Psoas muscle (tissue), 8 donors: ENCODE measurements at regions of chr12 and their contacts with region 1.

Region 1: GRCh38 chr12:57452937-57453509 is 2.1 kb upstream of the INHBE start:
- DNase-seq: peak; percentile 80 to 90
- ATAC-seq: peak; percentile 71 to 87 (median 81)
- H3K4me3 ChIP-seq: peak overlapping the region; percentile 39
- H3K27ac ChIP-seq: peak overlapping the region; percentile 87
- H3K4me1 ChIP-seq: peaks cover 35% of the 10 kb centered on the region
- H3K27me3 ChIP-seq: no peaks in the 10 kb centered on the region
- CTCF ChIP-seq: peak; percentile 90

Region 2: DNA sequence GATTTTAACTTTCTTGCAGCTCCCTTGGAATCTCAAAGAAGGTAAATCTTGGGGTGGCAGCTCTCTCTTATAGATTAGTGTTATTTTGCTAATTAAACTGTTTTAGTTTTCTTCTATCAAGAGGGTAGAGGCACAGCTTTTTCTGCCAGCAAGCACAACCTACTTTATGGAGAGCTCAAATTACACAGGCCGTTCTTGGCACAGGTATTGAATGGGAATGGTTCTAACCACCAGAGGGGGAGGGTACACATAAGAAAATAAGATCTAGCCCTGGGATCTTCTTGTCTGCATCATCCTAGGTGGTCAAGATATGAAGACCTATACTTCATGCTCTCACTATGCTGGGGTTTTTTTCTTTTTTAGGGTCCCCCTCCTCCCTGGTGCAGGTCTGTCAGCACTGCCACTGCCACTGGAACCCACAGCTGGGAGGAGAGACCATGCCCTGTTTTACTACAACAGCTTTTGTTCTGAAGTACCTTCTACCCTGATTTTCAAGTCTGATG is 153.5 kb before region 1 on chr12:
- intact Hi-C with region 1: loop called in 1 of 2 experiments (anchors 5 kb)
- DNase-seq: no peak
- ATAC-seq: peak; percentile 64 to 90 (median 82)
- H3K4me3 ChIP-seq: no peak overlapping the region
- H3K27ac ChIP-seq: no peak overlapping the region
- H3K4me1 ChIP-seq: peaks cover 12% of the 10 kb centered on the region
- H3K27me3 ChIP-seq: no peaks in the 10 kb centered on the region
- CTCF ChIP-seq: no peak

Region 3: GRCh38 chr12:57309420-57309819 is 143.6 kb before region 1 on chr12:
- intact Hi-C with region 1: loop called (anchors 2 to 5 kb)
- DNase-seq: no peak
- ATAC-seq: no peak
- H3K4me3 ChIP-seq: no peak overlapping the region
- H3K27ac ChIP-seq: no peak overlapping the region
- H3K4me1 ChIP-seq: no peaks in the 10 kb centered on the region
- H3K27me3 ChIP-seq: no peaks in the 10 kb centered on the region
- CTCF ChIP-seq: no peak